CD14-positive monocyte (primary cell): ENCODE measurements at regions of chr19 and their contacts with region 1.

Region 1: GRCh38 chr19:13861732-13862531 is 15.0 kb upstream of the NANOS3 start:
- DNase-seq: peak; percentile 96 to 99 (median 99)
- H3K4me3 ChIP-seq: peak overlapping the region; percentile 42 to 68 (median 50)
- H3K4me3 Mint-ChIP-seq: peak overlapping the region; percentile 96 to 99
- H3K27ac ChIP-seq: peak overlapping the region; percentile 85 to 96
- H3K27ac Mint-ChIP-seq: peak overlapping the region; percentile 98 to 100 (median 100)
- H3K4me1 ChIP-seq: peaks cover 27 to 47% of the 10 kb centered on the region in 2 donors
- H3K4me1 Mint-ChIP-seq: peaks cover 39% of the 10 kb centered on the region
- H3K27me3 ChIP-seq: peaks cover 17 to 27% of the 10 kb centered on the region in 2 donors
- H3K27me3 Mint-ChIP-seq: peaks cover 24 to 40% (median 31%) of the 10 kb centered on the region in 3 donors
- CTCF ChIP-seq: peak; percentile 96

Region 2: DNA sequence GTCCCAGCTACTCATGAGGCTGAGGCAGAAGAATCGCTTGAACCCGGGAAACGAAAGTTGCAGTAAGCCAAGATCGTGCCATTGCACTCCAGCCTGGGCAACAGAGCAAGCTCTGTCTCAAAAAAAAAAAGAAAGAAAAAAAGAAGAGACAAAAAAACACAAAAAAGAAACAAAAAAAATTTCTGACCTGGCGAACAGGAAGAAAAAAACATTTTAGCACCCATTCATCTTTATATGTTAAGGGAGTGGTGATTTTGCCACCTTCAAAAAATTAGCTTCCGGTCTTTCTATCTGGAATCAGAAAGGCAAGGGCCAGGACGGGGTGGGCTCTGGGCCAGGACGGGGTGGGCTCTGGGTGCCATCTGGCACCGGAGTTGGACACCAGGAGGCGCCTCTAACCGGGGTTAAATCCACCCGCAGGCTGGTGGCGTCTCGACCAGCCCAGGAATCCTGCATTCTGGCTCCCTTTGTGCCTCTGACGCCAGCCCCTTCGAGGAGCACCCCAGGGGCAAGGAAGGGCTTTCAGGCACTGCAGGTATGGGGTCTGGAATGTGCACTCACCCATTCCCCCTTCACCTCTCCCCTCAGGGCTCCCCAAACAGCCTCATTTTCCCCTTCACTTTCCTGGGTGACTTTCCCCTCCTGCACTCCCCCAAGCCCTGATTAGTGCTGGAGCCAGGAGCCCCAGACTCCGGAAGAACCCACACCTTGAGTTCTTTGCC is 77.0 kb before region 1 on chr19:
- intact Hi-C with region 1: loop called (anchors 5 kb)
- DNase-seq: peak; percentile 38 to 70 (median 66)
- H3K4me3 ChIP-seq: no peak overlapping the region
- H3K4me3 Mint-ChIP-seq: peak overlapping the region; percentile 54 to 67
- H3K27ac ChIP-seq: no peak overlapping the region
- H3K27ac Mint-ChIP-seq: peak overlapping the region in 3 of 7 donors; percentile 6 to 61 (median 48)
- H3K4me1 ChIP-seq: peaks cover 35 to 44% of the 10 kb centered on the region in 2 donors
- H3K4me1 Mint-ChIP-seq: peaks cover 37% of the 10 kb centered on the region
- H3K27me3 ChIP-seq: no peaks in the 10 kb centered on the region
- H3K27me3 Mint-ChIP-seq: peaks cover 0 to 3% (median 0%) of the 10 kb centered on the region in 3 donors
- CTCF ChIP-seq: peak; percentile 82

Region 3: GRCh38 chr19:13825489-13826391 is 36.2 kb before region 1 on chr19:
- intact Hi-C with region 1: loop called in 1 of 2 experiments (anchors 5 kb)
- DNase-seq: no peak
- H3K4me3 ChIP-seq: no peak overlapping the region
- H3K4me3 Mint-ChIP-seq: no peak overlapping the region
- H3K27ac ChIP-seq: no peak overlapping the region
- H3K27ac Mint-ChIP-seq: peak overlapping the region in 3 of 7 donors; percentile 9 to 75 (median 25)
- H3K4me1 ChIP-seq: no peaks in the 10 kb centered on the region
- H3K4me1 Mint-ChIP-seq: peaks cover 6% of the 10 kb centered on the region
- H3K27me3 ChIP-seq: no peaks in the 10 kb centered on the region
- H3K27me3 Mint-ChIP-seq: peaks cover 0 to 2% (median under 1%) of the 10 kb centered on the region in 3 donors
- CTCF ChIP-seq: peak; percentile 15

Region 4: GRCh38 chr19:13846557-13847406 is 15.2 kb before region 1 on chr19:
- intact Hi-C with region 1: loop called (anchors 1 to 2 kb)
- DNase-seq: peak; percentile 98 to 99 (median 99)
- H3K4me3 ChIP-seq: peak overlapping the region; percentile 39 to 65 (median 63)
- H3K4me3 Mint-ChIP-seq: peak overlapping the region; percentile 78 to 85
- H3K27ac ChIP-seq: peak overlapping the region; percentile 99
- H3K27ac Mint-ChIP-seq: peak overlapping the region; percentile 99 to 100 (median 100)
- H3K4me1 ChIP-seq: peaks cover 67 to 68% of the 10 kb centered on the region in 2 donors
- H3K4me1 Mint-ChIP-seq: peaks cover 66% of the 10 kb centered on the region
- H3K27me3 ChIP-seq: no peaks in the 10 kb centered on the region
- H3K27me3 Mint-ChIP-seq: peaks cover 0 to 5% (median 0%) of the 10 kb centered on the region in 3 donors
- CTCF ChIP-seq: no peak